Caco-2 (cell line): ENCODE measurements at regions of chr20 and their contacts with region 1.

Region 1: GRCh38 chr20:40617594-40617993 is 71.4 kb downstream of the MAFB start:
- DNase-seq: no peak
- H3K4me3 ChIP-seq: no peak overlapping the region
- H3K4me3 Mint-ChIP-seq: peak overlapping the region; percentile 7
- H3K27ac Mint-ChIP-seq: no peak overlapping the region
- H3K4me1 ChIP-seq: peaks cover 4% of the 10 kb centered on the region; the same call in 1 of the 2 replicates
- H3K4me1 Mint-ChIP-seq: no peaks in the 10 kb centered on the region
- H3K27me3 ChIP-seq: no peaks in the 10 kb centered on the region; the same call in 1 of the 2 replicates
- H3K27me3 Mint-ChIP-seq: peaks cover 14% of the 10 kb centered on the region
- CTCF ChIP-seq: no peak

Region 2: DNA sequence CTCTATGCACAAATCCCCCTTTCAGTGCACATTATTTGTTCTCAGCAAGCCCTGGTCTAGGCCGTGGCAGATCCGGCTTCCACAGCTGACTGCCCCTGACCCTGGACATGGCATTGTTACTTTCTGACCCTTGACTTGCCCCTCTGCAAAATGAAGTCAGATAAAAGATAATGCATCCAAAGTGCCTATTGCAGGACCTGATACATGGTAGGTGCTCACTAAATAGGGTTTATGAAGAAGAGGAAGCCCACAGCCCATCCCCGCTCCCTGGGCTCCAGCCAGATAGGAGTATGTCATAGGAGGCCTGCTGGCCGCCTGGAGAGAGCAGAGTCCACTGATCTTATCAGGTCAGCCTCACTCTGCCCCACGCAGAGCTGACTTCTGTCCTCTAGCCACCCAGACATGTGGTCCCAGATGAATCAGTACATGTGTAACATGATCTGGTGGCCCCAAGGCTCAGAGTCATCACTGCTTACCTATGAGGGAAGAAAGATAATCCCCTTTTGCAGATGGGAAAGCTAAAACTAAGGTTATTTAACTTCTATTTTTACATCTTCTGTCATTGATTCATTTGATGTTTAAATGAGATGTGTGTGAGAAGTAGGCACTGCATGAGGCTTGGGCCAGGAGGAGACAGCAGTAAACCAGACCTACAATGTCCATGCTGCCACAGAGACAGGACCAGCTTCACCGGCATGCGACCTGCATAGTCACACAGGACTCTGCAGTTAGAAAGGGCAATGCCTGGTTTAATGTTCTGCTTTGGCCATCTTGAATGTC is 51.0 kb after region 1 on chr20:
- CTCF ChIA-PET with region 1: no interaction called
- POLR2A ChIA-PET with region 1: no interaction called
- intact Hi-C with region 1: loop called (anchors 1 kb)
- DNase-seq: peak; percentile 72 to 90
- H3K4me3 ChIP-seq: no peak overlapping the region
- H3K4me3 Mint-ChIP-seq: no peak overlapping the region
- H3K27ac Mint-ChIP-seq: no peak overlapping the region
- H3K4me1 ChIP-seq: peaks cover 32% of the 10 kb centered on the region
- H3K4me1 Mint-ChIP-seq: peaks cover 6% of the 10 kb centered on the region
- H3K27me3 ChIP-seq: no peaks in the 10 kb centered on the region
- H3K27me3 Mint-ChIP-seq: no peaks in the 10 kb centered on the region
- CTCF ChIP-seq: no peak